ENCODE measurements at regions of chr4 and their contacts with region 1.

Region 1: DNA sequence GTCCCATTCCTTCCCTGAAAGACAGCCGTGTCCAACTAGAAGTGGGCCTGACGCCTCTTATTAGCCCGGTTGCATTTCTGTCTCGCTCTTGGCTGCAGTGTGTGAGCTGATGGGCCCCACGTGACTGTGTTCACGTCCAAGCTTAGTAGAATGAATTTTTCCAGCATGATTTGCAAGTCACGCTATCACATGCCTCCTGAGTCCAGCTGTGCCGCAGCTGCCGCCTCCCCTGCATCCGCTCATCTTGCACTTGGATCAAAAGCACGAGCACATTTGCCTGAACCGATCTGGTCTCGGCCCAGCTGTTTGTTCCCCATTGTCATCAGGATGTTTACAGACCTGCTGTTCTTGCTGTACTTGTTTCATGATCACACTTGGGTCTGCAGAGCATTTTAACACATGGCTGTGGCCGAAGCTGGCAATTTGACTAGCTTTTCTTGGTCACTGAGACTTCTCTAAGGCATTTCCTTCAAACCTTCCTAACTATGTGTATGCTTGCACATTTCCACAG is 126.5 kb downstream of the KIT start:
- DNase-seq: no peak
- H3K4me3 ChIP-seq: no peak overlapping the region
- H3K27ac ChIP-seq: no peak overlapping the region
- H3K4me1 ChIP-seq: no peaks in the 10 kb centered on the region
- H3K27me3 ChIP-seq: peaks cover 3% of the 10 kb centered on the region
- CTCF ChIP-seq: no peak

Region 2: GRCh38 chr4:54658252-54659093 is 125.7 kb before region 1 on chr4:
- CTCF ChIA-PET with region 1: no interaction called
- dilution Hi-C with region 1: no loop called
- in situ Hi-C with region 1: no loop called
- intact Hi-C with region 1: no loop called
- DNase-seq: peak; percentile 21
- H3K4me3 ChIP-seq: peak overlapping the region; percentile 33 to 47 (median 43)
- H3K27ac ChIP-seq: no peak overlapping the region
- H3K4me1 ChIP-seq: peaks cover 43% of the 10 kb centered on the region
- H3K27me3 ChIP-seq: peaks cover 27% of the 10 kb centered on the region
- CTCF ChIP-seq: peak in 1 of 2 donors; percentile 21

Region 3: GRCh38 chr4:54767376-54767775 is 16.8 kb before region 1 on chr4:
- CTCF ChIA-PET with region 1: interaction called, 21 read pairs
- dilution Hi-C with region 1: no loop called
- in situ Hi-C with region 1: no loop called
- intact Hi-C with region 1: no loop called
- DNase-seq: no peak
- H3K4me3 ChIP-seq: no peak overlapping the region
- H3K27ac ChIP-seq: no peak overlapping the region
- H3K4me1 ChIP-seq: no peaks in the 10 kb centered on the region
- H3K27me3 ChIP-seq: peaks cover 2% of the 10 kb centered on the region
- CTCF ChIP-seq: no peak

Measured in mammary epithelial cell (primary cell).